ENCODE measurements at regions of chr11 and their contacts with region 1.

Region 1: DNA sequence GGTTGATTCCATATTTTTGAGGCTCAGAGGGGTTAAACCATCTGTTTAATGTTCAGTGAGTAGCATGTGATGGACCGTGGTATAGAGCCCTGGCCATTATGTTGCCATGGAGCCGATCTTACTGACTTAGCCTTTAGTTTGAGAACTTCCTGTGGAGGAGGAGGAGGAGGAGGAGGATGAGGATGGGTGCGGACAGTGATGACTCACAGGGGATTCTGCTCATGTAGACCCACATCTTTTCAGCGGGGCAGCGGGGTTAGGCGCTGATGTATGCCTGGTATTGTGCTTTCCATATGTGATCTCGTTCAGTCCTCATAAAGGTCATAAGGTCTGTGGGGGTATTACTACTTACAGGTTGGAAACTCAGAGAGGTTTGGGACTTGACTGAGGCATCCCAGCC is 13.9 kb downstream of the STX3 start:
- DNase-seq: no peak
- ATAC-seq: no peak
- H3K4me3 ChIP-seq: no peak overlapping the region
- H3K27ac ChIP-seq: no peak overlapping the region
- H3K4me1 ChIP-seq: no peaks in the 10 kb centered on the region
- H3K27me3 ChIP-seq: no peaks in the 10 kb centered on the region
- CTCF ChIP-seq: no peak
- POLR2A ChIP-seq: no peak
- RAD21 ChIP-seq: no peak

Region 2: DNA sequence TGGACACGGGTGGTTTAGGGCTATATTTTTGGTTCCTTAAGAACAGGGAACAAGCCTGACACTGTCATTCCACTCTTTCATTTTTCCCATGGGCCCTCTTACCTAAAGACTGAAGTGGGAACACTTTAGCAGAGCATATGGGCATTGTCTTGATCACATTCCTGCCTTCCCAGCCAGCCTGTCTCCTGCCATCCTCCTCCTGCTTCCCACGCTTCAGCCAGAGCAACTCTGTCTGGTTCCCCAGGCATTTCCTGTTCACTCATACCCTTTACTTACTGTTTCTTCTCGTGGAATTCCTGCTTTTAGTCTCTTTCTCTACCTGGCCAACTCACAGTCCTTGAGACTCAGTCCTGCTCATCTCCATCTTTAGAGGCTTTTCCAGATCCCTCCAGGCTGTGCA is 18.7 kb after region 1 on chr11:
- CTCF ChIA-PET with region 1: interaction called, 15 read pairs
- POLR2A ChIA-PET with region 1: no interaction called
- dilution Hi-C with region 1: no loop called
- in situ Hi-C with region 1: no loop called
- intact Hi-C with region 1: no loop called
- DNase-seq: peak; percentile 73
- ATAC-seq: peak; percentile 63
- H3K4me3 ChIP-seq: no peak overlapping the region
- H3K27ac ChIP-seq: no peak overlapping the region
- H3K4me1 ChIP-seq: peaks cover 6% of the 10 kb centered on the region
- H3K27me3 ChIP-seq: no peaks in the 10 kb centered on the region
- CTCF ChIP-seq: no peak
- POLR2A ChIP-seq: no peak
- RAD21 ChIP-seq: no peak

Measured in IMR-90 (cell line).